SK-N-SH (cell line): ENCODE measurements at regions of chr7 and their contacts with region 1.

Region 1: DNA sequence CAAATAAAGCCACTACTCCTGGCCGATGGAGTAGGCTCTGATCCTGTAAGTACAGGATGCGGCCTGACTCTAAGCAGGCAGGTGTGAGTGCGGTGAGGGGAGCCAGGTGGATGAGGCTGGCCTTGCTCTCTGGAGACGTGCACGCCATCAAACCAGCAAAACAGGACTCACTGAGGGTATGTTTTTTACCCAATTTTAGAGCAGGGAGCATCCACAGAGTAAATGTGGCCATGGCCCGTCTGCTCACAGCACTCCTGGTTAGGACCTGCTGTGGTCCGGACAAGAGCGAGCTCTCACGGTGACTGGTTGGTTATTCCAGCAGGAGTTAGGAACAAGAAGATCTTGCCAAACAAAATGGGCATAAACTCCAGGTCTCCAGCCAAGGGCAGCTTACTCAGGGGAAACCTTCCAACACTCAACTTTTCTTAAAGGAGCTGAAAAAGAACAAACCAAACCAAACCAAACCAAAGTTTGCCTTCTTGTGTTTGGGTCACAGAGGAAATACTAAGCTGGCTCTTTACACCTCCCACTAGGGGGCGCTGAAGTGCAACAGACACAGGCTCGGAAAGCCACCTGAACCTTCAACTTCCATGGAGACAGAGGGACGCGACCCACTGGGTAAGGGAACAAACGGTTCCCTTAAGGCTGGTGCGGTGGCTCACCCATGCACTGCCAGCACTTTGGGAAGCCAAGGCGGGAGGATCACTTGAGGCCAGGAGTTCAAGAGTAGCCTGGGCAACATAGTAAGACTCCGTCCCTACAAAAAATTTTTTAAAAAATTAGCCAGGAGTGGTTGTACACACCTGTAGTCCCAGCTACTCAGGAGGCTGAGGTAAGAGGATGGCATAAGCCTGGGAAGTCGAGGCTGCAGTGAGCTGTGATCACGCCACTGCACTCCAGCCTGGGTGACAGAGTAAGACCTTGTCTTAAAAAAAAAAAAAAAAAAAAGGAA is 122.4 kb downstream of the CLEC2L start:
- DNase-seq: peak; percentile 85
- H3K4me3 ChIP-seq: no peak overlapping the region; a peak in 1 of 4 replicates
- H3K27ac ChIP-seq: no peak overlapping the region
- H3K4me1 ChIP-seq: peaks cover 0 to 5% of the 10 kb centered on the region in 2 experiments; a peak in 1 of 4 replicates
- H3K27me3 ChIP-seq: no peaks in the 10 kb centered on the region
- CTCF ChIP-seq: peak; percentile 99
- EP300 ChIP-seq: no peak
- RAD21 ChIP-seq: peak; percentile 100

Region 2: DNA sequence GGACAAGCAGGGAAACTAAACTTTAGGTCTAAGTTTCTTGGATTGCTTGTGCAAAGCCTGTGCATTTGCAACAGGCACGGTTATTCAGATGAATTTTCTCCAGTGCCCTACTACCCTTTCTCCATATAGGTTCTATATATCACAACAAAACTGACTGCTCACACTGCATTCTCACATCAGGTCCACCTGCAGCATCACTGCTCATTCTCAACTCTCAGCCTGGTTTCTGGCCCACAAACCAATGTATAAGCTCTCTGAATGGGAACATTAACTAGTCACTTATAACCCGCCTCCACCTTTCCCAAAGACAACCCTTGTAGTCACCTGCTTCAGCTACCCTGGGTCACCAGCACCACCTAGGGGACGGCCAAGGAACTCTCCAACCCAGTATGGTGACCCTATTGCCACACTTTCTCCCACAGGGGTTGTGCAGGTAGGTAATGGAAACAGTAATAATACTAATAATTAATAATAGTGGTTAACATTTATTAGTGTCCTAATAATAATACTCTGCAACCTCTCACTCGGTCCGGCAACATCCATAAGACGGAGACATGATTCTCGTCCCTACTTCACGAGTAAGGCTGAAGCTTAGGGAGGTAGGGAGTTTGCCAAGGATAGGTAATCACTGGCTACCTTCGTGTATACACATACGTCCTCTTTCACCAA is 25.0 kb before region 1 on chr7:
- CTCF ChIA-PET with region 1: interaction called, 26 read pairs
- POLR2A ChIA-PET with region 1: no interaction called
- DNase-seq: peak; percentile 67
- H3K4me3 ChIP-seq: no peak overlapping the region
- H3K27ac ChIP-seq: no peak overlapping the region
- H3K4me1 ChIP-seq: no peaks in the 10 kb centered on the region
- H3K27me3 ChIP-seq: no peaks in the 10 kb centered on the region
- CTCF ChIP-seq: peak; percentile 76
- EP300 ChIP-seq: no peak
- RAD21 ChIP-seq: peak; percentile 79

Region 3: DNA sequence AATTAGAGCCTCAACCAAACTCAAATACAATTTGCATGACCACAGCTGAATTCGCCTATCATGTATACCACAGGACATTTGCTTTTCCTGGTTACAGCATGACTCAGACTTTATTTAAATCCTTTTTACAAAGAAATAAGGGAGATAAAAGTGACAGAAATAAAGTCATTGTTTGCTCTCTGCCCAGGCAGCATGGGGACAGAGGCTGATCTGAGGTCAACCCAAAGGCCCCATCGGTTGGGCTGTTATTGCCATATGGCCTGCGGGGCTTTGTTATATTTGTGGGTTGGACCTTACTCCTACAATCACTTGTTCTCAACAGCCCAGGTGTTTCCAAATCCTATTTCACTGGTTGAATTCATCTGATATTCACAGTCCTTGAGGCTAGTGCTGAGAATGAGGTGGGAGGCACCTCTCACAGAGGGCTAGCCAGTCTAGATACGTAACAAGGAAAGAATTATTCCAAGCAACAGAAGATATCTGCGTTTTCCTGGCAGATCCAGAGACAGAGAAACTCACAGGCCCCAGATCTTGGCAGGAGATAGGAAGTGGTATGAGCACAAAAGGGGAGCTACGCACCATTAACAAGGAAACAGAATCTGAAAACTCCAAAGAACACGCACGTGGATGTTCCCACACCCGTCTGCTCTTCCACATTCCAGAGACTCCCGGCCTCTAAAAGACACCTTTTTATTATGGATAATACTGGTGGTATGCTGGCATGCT is 14.6 kb after region 1 on chr7:
- CTCF ChIA-PET with region 1: interaction called, 78 read pairs
- POLR2A ChIA-PET with region 1: interaction called, 6 read pairs
- DNase-seq: no peak
- H3K4me3 ChIP-seq: no peak overlapping the region
- H3K27ac ChIP-seq: no peak overlapping the region
- H3K4me1 ChIP-seq: peaks cover 0 to 20% of the 10 kb centered on the region in 2 experiments; a peak in 1 of 4 replicates
- H3K27me3 ChIP-seq: no peaks in the 10 kb centered on the region
- CTCF ChIP-seq: no peak
- EP300 ChIP-seq: no peak
- RAD21 ChIP-seq: no peak

Region 4: DNA sequence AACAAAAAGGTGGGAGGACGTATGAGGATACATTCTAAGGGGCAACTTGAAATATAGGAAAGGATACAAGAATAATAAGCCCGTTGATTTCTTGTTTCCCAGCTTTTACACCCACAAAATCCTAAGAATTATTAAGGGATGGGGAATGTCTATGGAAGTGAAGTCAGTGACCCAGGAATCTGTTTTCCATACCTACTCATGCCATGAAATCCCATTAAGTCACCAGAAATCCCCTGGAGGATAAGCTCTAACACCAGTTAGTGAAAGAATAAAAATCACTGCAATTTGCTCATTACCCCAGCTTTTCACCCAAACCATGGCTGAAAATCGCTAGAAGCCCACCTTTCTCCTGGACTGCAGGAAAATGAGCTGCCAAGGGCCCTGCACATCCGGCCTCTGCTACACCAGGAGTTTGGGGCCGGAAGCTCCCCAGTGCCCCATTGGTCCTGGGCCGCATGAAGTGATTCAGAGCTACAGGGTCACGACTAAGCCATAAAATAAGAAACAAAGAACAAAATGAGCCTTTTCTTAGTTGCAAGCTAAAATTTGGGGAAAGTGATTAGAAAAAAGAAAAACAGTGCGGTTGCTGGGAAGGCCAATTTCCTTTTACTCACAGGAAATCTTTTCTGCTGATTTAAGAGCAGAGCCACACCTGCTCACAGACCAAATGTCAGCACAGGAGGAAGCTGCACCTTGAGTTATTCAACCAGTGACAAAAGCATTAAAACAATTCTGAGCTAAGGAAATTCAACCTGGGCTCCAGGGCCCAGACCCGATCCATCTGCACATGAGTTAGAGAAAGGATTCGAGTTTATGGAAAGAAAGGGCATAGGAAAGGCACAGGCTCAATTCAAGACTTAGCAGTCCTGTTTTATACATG is 91.6 kb after region 1 on chr7:
- CTCF ChIA-PET with region 1: interaction called, 10 read pairs
- POLR2A ChIA-PET with region 1: no interaction called
- DNase-seq: no peak
- H3K4me3 ChIP-seq: no peak overlapping the region
- H3K27ac ChIP-seq: 0 out of 4 replicates have a peak overlapping the region, but pooled peaks of 1 of the 2 experiments have one; percentile 6
- H3K4me1 ChIP-seq: peaks cover 17 to 42% of the 10 kb centered on the region in 2 experiments
- H3K27me3 ChIP-seq: no peaks in the 10 kb centered on the region
- CTCF ChIP-seq: no peak
- EP300 ChIP-seq: no peak
- RAD21 ChIP-seq: no peak

Region 5: DNA sequence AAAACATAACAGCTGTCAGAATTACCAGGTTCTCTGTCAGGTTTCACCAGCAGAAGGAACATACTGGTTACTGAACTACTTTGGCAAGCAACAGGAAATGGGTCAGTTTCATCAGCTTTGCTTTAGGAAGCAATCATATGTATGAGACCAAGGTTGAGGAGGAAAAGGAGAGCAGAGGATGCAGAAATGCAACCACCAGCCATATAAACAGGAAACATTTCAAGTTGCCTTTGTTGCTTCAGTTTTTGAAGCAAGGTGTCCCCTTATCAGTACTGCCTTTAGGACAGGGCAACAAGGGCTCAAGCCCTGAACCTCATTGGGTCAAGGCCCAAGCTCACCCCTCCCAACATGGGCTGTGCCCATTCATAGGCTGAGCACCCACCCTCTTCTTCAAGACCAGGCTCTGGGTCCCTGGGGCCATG is 121.7 kb after region 1 on chr7:
- CTCF ChIA-PET with region 1: interaction called, 25 read pairs
- POLR2A ChIA-PET with region 1: no interaction called
- DNase-seq: no peak
- H3K4me3 ChIP-seq: no peak overlapping the region
- H3K27ac ChIP-seq: no peak overlapping the region
- H3K4me1 ChIP-seq: peaks cover 22 to 27% of the 10 kb centered on the region in 2 experiments
- H3K27me3 ChIP-seq: no peaks in the 10 kb centered on the region
- CTCF ChIP-seq: no peak
- EP300 ChIP-seq: no peak
- RAD21 ChIP-seq: no peak

Region 6: DNA sequence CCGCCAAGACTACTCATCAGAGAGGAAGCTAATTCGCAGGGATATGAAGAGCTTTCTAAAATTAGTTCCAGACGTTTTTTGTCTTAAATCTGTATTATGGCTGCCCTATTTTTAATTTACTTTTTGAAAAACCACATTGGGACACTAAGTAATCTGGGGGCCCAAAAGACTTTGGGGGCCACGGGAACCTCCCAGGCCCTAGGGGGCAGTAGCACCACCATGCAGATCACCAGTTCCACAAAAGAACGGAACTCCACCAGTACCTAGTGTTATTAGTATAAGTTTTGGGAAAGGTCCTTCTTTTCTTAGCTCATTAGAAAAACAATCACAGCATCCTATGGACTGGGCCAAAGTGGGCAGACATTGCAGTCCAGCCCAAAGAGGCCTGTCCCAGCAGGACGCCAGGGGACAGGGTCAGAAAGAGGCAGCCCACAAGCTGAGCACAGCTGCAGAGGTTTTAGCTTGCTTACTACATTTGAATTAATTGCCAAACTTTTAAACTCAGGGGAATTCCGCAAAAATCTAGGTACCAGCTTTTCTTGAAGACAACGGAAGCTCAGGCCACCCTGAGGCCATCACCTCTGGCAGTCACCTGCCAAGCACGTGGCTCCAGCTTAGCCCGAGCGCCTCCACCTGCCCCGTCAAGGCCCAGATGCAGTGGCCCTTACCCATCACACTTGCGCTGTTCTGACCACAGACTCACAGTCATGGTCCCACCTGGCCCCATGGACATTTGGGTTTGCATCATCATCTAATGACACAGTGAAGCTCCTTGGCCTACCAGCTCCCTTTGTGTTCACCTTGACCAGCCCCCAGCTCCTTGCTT is 342.1 kb after region 1 on chr7:
- CTCF ChIA-PET with region 1: interaction called, 47 read pairs
- POLR2A ChIA-PET with region 1: interaction called, 3 read pairs
- DNase-seq: no peak
- H3K4me3 ChIP-seq: no peak overlapping the region
- H3K27ac ChIP-seq: no peak overlapping the region
- H3K4me1 ChIP-seq: peaks cover 0 to 9% of the 10 kb centered on the region in 2 experiments; a peak in 1 of 4 replicates
- H3K27me3 ChIP-seq: no peaks in the 10 kb centered on the region; the same call in 1 of the 2 replicates
- CTCF ChIP-seq: peak; percentile 29; the same call in 1 of the 2 replicates
- EP300 ChIP-seq: no peak
- RAD21 ChIP-seq: no peak

Region 7: DNA sequence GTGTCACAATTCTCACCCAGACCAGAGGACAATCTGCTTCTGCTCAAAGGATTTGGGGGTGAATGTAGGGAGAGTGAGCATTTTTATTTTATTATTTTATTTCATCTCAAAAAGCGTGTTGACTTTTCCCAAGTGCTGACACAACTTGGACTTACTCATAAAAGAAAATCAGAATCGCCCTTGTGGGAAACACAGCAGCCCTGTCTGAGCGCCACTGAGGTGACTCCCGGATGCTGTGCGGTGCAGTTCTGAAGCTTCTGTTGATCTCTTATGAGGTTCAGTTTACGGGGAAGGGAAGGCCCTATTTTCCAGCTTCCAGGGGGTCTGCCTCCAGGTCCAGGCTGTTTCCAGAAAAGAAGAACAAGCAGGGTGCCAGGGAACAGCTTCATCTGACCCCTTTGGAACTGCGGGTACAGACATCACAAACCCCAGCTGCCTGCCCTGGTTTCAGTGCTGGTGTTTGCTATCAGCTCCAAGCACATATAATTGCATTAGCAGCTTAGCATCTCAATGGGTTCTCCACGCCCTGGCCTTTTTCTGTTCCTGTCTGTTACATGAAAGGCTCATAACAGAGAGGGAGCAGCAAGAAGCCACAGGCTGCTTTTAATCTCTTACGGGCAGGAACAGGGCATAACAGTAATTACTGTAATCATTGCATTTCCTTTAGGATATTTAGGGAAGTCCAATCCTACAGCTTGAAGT is 364.5 kb after region 1 on chr7:
- CTCF ChIA-PET with region 1: interaction called, 229 read pairs
- POLR2A ChIA-PET with region 1: no interaction called
- DNase-seq: peak; percentile 93
- H3K4me3 ChIP-seq: no peak overlapping the region
- H3K27ac ChIP-seq: peak overlapping the region in 1 of 2 experiments; percentile 86; a peak in 2 of 4 replicates
- H3K4me1 ChIP-seq: peaks cover 0 to 18% of the 10 kb centered on the region in 2 experiments; a peak in 2 of 4 replicates
- H3K27me3 ChIP-seq: no peaks in the 10 kb centered on the region; the same call in 1 of the 2 replicates
- CTCF ChIP-seq: no peak
- EP300 ChIP-seq: peak in 1 of 2 experiments; percentile 89; a peak in 2 of 4 replicates
- RAD21 ChIP-seq: peak; percentile 50